Naive thymus-derived CD4-positive, alpha-beta T cell (primary cell): ENCODE measurements at regions of chr13 and their contacts with region 1.

Region 1: DNA sequence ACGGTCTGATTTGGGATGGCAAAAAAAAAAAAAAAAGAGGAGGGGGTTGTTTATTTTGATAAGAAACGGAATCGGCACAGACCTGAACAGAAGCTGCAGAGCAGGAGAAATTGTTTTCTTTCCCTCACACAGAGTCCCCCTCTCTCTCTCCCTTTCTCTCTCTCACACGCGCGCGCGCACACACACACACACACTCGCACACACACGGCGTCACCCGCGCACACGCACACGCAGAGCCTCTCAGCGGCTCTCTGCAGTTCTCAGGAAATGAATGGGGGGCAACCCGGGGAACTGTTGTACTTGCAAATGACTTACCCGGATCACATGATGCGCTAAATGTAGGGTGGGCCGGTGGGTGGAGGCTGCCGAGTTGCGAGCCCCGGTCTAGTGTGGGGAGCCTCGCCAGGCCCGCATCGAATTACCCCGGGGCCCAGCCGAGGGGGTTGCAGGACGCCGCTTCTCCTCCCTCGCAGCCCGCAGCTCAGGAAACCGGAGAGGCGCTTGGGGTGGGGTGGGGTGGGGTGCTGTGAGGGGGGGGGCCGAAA is 475 bp downstream of the KLF12 start:
- DNase-seq: peak; percentile 69 to 97 (median 93)
- ATAC-seq: peak; percentile 72
- H3K4me3 ChIP-seq: peak overlapping the region; percentile 86
- H3K4me3 Mint-ChIP-seq: peak overlapping the region in 8 of 10 donors; percentile 92 to 100 (median 97)
- H3K27ac ChIP-seq: peak overlapping the region; percentile 98
- H3K27ac Mint-ChIP-seq: peak overlapping the region; percentile 97 to 100 (median 99)
- H3K4me1 ChIP-seq: peaks cover 24 to 39% of the 10 kb centered on the region in 2 donors
- H3K4me1 Mint-ChIP-seq: peaks cover 14 to 38% (median 37%) of the 10 kb centered on the region in 7 donors
- H3K27me3 ChIP-seq: no peaks in the 10 kb centered on the region
- H3K27me3 Mint-ChIP-seq: peaks cover 0 to 5% (median 0%) of the 10 kb centered on the region in 5 donors

Region 2: DNA sequence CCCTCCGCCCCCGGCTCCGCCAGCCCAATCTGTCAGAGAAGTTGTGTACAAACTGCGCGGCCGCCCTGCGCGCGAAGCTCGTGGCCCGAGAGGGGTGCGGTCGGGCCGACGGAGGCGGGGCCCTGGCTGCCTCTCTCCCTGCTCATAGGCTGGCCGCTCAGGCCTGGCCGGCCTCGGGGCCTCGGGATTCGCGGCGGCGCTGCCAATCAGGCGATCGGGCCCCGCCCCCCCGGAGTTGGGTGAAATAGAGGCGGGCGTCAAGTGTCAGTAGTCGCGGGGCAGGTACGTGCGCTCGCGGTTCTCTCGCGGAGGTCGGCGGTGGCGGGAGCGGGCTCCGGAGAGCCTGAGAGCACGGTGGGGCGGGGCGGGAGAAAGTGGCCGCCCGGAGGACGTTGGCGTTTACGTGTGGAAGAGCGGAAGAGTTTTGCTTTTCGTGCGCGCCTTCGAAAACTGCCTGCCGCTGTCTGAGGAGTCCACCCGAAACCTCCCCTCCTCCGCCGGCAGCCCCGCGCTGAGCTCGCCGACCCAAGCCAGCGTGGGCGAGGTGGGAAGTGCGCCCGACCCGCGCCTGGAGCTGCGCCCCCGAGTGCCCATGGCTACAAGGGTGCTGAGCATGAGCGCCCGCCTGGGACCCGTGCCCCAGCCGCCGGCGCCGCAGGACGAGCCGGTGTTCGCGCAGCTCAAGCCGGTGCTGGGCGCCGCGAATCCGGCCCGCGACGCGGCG is 1074.8 kb before region 1 on chr13 and contains the start of gene KLF5:
- CTCF ChIA-PET with region 1: no interaction called
- POLR2A ChIA-PET with region 1: no interaction called
- intact Hi-C with region 1: loop called in 1 of 2 experiments (anchors 5 kb)
- DNase-seq: peak; percentile 93 to 98 (median 94)
- ATAC-seq: peak; percentile 98
- H3K4me3 ChIP-seq: peak within 1 kb of the TSS; percentile 58
- H3K4me3 Mint-ChIP-seq: peak within 1 kb of the TSS; percentile 82 to 94 (median 90)
- H3K27ac ChIP-seq: peak within 1 kb of the TSS; percentile 42
- H3K27ac Mint-ChIP-seq: peak within 1 kb of the TSS; percentile 38 to 92 (median 79)
- H3K4me1 ChIP-seq: peaks cover 4 to 10% of the 10 kb centered on the region in 2 donors
- H3K4me1 Mint-ChIP-seq: peaks cover 6 to 32% (median 23%) of the 10 kb centered on the region in 7 donors
- H3K27me3 ChIP-seq: peaks cover 5 to 10% of the 10 kb centered on the region in 2 donors
- H3K27me3 Mint-ChIP-seq: peaks cover 19 to 58% (median 40%) of the 10 kb centered on the region in 5 donors
- total RNA-seq, gene KLF5: 3.6 to 13.3 (median 5.7) TPM

Region 3: DNA sequence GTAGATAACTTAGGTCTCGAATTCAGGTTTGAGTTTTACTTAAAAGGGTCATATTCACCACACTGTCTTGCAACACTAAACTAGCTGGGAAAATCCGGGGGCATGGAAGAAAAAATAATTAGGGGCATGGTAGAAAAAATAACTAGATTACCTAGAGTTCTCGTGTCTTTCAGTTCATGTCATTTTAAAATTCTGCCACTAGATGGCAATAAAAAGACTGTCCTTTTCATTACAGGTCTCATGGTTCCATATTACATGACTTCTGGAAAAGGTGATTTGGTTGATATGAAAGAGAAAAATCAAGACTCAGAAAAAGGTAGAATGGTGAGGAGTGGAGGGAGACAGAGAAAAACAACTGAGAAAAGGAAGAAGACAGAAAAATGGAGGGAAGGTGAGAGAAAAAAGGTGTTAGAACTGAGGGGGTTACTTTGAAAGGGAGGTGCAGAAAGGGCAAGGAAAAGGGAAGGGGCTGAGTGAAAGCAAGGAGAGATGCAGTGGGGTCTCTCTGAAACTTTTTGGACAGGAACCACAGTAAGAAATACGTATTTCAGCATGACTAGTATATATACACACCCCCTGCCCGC is 298.5 kb before region 1 on chr13:
- CTCF ChIA-PET with region 1: no interaction called
- POLR2A ChIA-PET with region 1: no interaction called
- intact Hi-C with region 1: loop called (anchors 1 kb)
- DNase-seq: peak in 7 of 9 donors; percentile 16 to 60 (median 54)
- ATAC-seq: peak; percentile 64
- H3K4me3 ChIP-seq: no peak overlapping the region
- H3K4me3 Mint-ChIP-seq: no peak overlapping the region
- H3K27ac ChIP-seq: no peak overlapping the region
- H3K27ac Mint-ChIP-seq: no peak overlapping the region
- H3K4me1 ChIP-seq: peaks cover 7 to 41% of the 10 kb centered on the region in 2 donors
- H3K4me1 Mint-ChIP-seq: peaks cover 5 to 71% (median 43%) of the 10 kb centered on the region in 7 donors
- H3K27me3 ChIP-seq: no peaks in the 10 kb centered on the region
- H3K27me3 Mint-ChIP-seq: no peaks in the 10 kb centered on the region

Region 4: DNA sequence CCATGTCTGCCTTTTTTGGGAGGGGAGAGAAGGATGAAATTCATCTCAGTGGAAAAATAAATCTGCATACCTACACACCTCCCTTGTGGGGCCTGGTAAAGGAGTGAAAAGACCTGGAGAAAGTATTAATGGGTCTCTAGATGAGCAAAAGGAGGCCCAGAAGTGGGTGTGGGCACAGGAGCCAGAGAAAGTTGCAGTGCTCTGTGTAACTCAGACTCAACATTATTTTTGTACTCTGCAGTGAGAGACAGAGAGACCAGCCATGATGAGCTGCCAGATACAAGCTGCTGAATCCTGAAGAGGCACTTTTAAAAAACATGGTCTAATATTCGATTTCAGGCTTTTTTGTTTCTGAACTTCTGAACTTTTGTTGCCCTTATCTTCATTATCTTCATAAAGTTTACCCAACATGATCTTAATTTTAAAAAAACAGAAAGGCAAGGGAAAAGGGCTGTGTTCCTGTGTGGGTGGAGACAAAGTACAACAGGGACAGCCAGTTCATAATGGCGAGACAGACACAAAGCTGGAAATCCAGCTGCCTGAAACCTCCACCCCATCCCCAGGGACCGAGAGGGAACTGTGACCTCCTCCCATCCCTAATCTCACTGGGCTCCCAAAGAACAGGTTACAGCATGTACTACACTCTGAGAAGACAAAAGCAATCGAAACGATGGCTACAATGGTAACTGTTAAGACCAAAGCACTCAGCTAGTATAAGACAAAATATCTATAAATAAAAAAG is 76.8 kb before region 1 on chr13:
- CTCF ChIA-PET with region 1: interaction called, 3 read pairs
- POLR2A ChIA-PET with region 1: interaction called, 28 read pairs
- intact Hi-C with region 1: loop called (anchors 1 to 2 kb)
- DNase-seq: no peak
- ATAC-seq: no peak
- H3K4me3 ChIP-seq: no peak overlapping the region
- H3K4me3 Mint-ChIP-seq: peak overlapping the region in 7 of 10 donors; percentile 3 to 52 (median 41)
- H3K27ac ChIP-seq: no peak overlapping the region
- H3K27ac Mint-ChIP-seq: peak overlapping the region in 7 of 9 donors; percentile 1 to 78 (median 33)
- H3K4me1 ChIP-seq: peaks cover 39 to 53% of the 10 kb centered on the region in 2 donors
- H3K4me1 Mint-ChIP-seq: peaks cover 48 to 94% (median 92%) of the 10 kb centered on the region in 7 donors
- H3K27me3 ChIP-seq: no peaks in the 10 kb centered on the region
- H3K27me3 Mint-ChIP-seq: no peaks in the 10 kb centered on the region

Region 5: GRCh38 chr13:74114202-74114601 is 19.5 kb before region 1 on chr13:
- CTCF ChIA-PET with region 1: no interaction called
- POLR2A ChIA-PET with region 1: interaction called, 4 read pairs
- intact Hi-C with region 1: loop called in 1 of 2 experiments (anchors 2 kb)
- DNase-seq: no peak
- ATAC-seq: no peak
- H3K4me3 ChIP-seq: no peak overlapping the region
- H3K4me3 Mint-ChIP-seq: peak overlapping the region in 6 of 10 donors; percentile 4 to 68 (median 15)
- H3K27ac ChIP-seq: no peak overlapping the region
- H3K27ac Mint-ChIP-seq: peak overlapping the region in 2 of 9 donors; percentile 16 to 62
- H3K4me1 ChIP-seq: peaks cover 0 to 17% of the 10 kb centered on the region in 2 donors
- H3K4me1 Mint-ChIP-seq: peaks cover 45 to 85% (median 78%) of the 10 kb centered on the region in 7 donors
- H3K27me3 ChIP-seq: no peaks in the 10 kb centered on the region
- H3K27me3 Mint-ChIP-seq: no peaks in the 10 kb centered on the region

Region 6: GRCh38 chr13:74251778-74252519 is 118.2 kb after region 1 on chr13:
- CTCF ChIA-PET with region 1: no interaction called
- POLR2A ChIA-PET with region 1: interaction called, 11 read pairs
- intact Hi-C with region 1: no loop called
- DNase-seq: no peak
- ATAC-seq: no peak
- H3K4me3 ChIP-seq: no peak overlapping the region
- H3K4me3 Mint-ChIP-seq: peak overlapping the region in 9 of 10 donors; percentile 17 to 54 (median 30)
- H3K27ac ChIP-seq: no peak overlapping the region
- H3K27ac Mint-ChIP-seq: peak overlapping the region in 7 of 9 donors; percentile 12 to 98 (median 54)
- H3K4me1 ChIP-seq: peaks cover 59 to 68% of the 10 kb centered on the region in 2 donors
- H3K4me1 Mint-ChIP-seq: peaks cover 39 to 94% (median 85%) of the 10 kb centered on the region in 7 donors
- H3K27me3 ChIP-seq: no peaks in the 10 kb centered on the region
- H3K27me3 Mint-ChIP-seq: peaks cover 0 to 5% (median 0%) of the 10 kb centered on the region in 5 donors

Region 7: DNA sequence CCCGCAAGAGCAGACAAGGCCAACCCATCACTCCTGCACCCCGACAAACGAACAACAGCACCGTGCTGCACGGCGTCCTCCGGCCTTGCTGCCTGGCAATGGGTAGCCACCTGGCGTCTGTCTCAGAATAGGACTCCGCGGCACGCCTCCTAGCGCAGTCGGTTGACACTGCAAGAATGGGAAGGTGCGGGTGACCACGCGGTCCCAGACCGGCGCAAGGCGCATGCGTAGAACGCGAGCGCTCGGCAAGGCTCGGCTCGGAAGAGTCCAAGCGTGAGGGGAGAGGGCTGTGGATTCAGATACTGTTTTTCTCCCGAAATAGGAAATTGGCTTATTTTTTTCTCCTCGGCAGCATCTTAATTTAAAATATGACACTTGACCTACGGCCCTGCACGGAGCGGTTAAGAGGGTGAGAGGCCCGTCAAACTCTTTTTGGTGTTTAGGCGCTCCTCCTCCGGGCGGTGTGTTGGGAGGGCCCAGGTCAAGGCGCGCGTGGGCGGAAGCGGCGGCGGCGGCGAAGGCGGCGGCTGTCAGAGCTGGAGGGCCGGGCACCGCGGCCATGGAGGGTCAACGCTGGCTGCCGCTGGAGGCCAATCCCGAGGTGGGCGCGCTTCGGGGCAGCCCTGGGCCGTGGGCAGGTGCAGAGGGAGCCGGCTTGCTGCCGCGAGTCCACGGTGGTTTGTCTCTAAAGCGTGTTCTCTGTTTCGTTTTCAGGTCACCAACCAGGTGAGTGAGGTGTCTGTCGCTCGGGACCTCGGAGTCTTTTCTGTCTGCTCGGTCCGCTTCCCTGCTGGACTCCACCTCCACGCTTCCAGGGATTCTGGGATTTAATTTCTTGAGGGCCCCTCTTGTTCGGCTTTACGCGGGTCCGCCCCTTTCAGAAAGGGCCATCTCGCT is 1415.8 kb after region 1 on chr13 and contains the start of gene UCHL3:
- CTCF ChIA-PET with region 1: no interaction called
- POLR2A ChIA-PET with region 1: no interaction called
- intact Hi-C with region 1: loop called in 1 of 2 experiments (anchors 1 kb)
- DNase-seq: peak; percentile 94 to 99 (median 97)
- ATAC-seq: peak; percentile 97
- H3K4me3 ChIP-seq: peak within 1 kb of the TSS; percentile 95
- H3K4me3 Mint-ChIP-seq: peak within 1 kb of the TSS; percentile 91 to 99 (median 96)
- H3K27ac ChIP-seq: peak within 1 kb of the TSS; percentile 84
- H3K27ac Mint-ChIP-seq: peak within 1 kb of the TSS; percentile 94 to 99 (median 98)
- H3K4me1 ChIP-seq: peaks cover 15% of the 10 kb centered on the region in 2 donors
- H3K4me1 Mint-ChIP-seq: peaks cover 27 to 53% (median 46%) of the 10 kb centered on the region in 7 donors
- H3K27me3 ChIP-seq: no peaks in the 10 kb centered on the region
- H3K27me3 Mint-ChIP-seq: peaks cover 0 to 2% (median 0%) of the 10 kb centered on the region in 5 donors
- total RNA-seq, gene UCHL3: 18.6 to 35.8 (median 20.6) TPM